Motor neuron (in vitro differentiated cells): ENCODE measurements at regions of chrX and their contacts with region 1.

Region 1: DNA sequence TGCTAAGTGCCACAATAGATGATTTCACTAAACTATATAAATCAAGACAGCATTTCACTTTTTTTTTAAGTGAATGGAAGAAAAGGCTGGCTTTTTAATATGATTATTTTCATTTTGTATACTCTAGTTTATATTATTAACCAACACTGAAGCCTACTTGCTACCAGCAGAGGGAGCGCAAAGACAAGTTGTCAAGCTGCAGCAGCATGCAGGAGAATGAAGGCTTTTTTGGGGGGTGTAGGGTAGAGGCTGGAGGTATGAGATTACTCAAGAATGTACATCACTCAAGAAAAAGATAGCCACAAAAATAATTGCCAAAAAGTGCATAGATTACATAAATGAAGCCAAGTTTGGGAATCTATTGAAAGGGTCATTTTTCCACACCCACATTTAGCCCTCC is 519.5 kb downstream of the FGF13 start:
- ATAC-seq: peak in 3 of 8 experiments; percentile 50 to 56 (median 50)
- H3K4me3 ChIP-seq: no peak overlapping the region
- H3K27ac ChIP-seq: no peak overlapping the region
- H3K4me1 ChIP-seq: no peaks in the 10 kb centered on the region

Region 2: DNA sequence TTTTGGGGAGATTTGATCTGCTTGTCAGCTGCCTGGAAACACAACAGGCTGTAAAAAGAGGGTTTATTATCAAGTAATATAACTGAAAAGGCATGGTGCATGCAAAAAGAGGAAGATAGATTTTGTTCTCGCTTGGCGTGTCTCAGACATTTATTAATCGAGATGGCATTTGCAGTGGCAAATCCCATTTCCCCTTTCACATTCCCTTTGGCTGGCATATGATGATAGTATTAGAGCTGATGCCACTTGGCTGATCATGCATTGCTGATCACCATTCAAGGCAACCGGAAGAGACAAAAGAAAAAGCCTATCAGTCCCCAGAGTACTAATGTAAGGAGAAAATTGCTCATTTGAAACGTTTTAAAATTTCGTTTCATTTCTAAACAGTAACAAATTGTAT is 524.2 kb before region 1 on chrX:
- in situ Hi-C with region 1: no loop called
- ATAC-seq: no peak
- H3K4me3 ChIP-seq: no peak overlapping the region
- H3K27ac ChIP-seq: no peak overlapping the region
- H3K4me1 ChIP-seq: no peaks in the 10 kb centered on the region

Region 3: DNA sequence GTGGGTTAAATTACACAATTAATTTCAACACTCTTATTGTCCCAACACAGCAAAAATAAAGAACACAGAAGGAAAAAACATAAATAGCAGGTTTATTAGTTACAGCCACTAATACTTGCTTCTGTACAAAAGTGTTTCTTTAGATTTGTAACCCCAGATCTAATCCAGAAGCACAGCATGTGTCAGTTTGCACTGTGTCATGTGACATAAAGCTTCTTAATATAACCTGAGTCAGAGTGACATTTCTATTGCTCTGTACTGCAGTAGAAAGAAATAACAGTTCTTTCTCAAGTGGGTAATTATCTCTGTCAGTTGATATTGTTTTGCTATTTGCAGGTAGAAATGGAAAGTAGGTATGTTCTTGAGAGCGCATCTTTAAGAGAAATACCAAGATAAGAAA is 203.5 kb before region 1 on chrX:
- in situ Hi-C with region 1: no loop called
- ATAC-seq: no peak
- H3K4me3 ChIP-seq: no peak overlapping the region
- H3K27ac ChIP-seq: no peak overlapping the region
- H3K4me1 ChIP-seq: no peaks in the 10 kb centered on the region

Region 4: GRCh38 chrX:138745196-138745595 is 553.2 kb after region 1 on chrX:
- in situ Hi-C with region 1: loop called in 3 of 9 experiments (anchors 10 to 25 kb)
- ATAC-seq: peak; percentile 35 to 68 (median 46)
- H3K4me3 ChIP-seq: no peak overlapping the region
- H3K27ac ChIP-seq: no peak overlapping the region
- H3K4me1 ChIP-seq: peaks cover 0 to 6% of the 10 kb centered on the region in 2 donors